ENCODE measurements at regions of chr19 and their contacts with region 1.

Region 1: DNA sequence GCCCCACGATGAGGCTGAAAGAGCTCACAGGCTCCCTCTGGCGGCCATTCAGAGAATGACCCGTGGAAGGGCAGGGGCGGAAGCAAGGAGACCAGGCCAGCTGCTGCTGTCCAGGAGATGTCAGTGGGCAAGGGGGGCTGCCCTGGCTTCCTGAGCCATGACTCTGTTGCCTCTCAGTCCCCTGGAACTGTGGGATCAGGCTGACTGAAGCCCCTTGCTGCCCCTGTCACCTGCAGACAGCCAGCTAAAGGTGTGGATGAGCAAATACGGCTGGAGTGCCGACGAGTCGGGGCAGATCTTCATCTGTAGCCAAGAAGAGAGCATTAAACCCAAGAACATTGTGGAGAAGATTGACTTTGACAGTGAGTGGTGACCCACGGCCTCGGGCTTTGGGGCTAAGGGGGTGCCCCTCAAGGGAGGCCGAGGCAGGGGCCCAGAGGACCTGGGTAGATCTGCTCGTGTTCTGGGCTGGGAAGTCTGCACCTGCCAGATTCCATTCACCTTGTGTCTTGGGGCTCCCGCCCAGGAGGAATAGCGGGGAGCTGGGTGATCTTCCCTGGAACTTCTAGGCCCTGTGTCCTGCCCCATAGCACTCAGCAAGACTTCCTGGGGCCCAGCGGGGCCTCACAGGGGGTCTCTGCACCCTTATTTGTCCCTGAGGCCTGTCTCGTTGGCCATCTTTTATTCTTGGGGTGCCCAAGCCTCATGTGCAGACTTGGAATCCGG is 12.5 kb upstream of the ACTN4 start:
- H3K4me3 ChIP-seq: no peak overlapping the region
- H3K27ac ChIP-seq: peak overlapping the region; percentile 31; the same call in 1 of the 2 replicates
- H3K4me1 ChIP-seq: no peaks in the 10 kb centered on the region; the same call in 1 of the 2 replicates
- CTCF ChIP-seq: peak; percentile 96

Region 2: GRCh38 chr19:38532939-38533338 is 102.0 kb before region 1 on chr19:
- CTCF ChIA-PET with region 1: interaction called, 11 read pairs
- POLR2A ChIA-PET with region 1: no interaction called
- H3K4me3 ChIP-seq: no peak overlapping the region
- H3K27ac ChIP-seq: no peak overlapping the region
- H3K4me1 ChIP-seq: no peaks in the 10 kb centered on the region
- CTCF ChIP-seq: no peak

Region 3: DNA sequence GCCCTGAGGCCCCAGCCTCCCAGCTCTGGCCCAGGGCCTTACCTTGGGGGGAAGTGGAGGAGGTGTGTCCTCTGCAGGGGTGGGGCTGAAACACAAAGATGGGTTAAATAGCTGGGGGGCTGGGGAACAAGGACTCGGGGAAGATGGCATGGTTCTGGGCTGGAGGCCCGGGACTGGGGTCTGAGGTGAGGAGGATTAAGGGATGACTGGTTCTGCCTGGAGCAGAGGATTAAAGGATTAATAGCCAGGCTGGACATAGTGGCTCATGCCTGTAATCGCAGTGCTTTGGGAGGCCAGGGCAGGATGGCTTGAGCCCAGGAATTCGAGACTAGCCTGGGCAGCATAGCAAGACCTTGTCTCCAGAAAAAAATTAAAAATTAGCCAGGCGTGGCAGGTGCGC is 28.8 kb before region 1 on chr19:
- CTCF ChIA-PET with region 1: interaction called, 13 read pairs
- POLR2A ChIA-PET with region 1: no interaction called
- H3K4me3 ChIP-seq: no peak overlapping the region
- H3K27ac ChIP-seq: no peak overlapping the region
- H3K4me1 ChIP-seq: no peaks in the 10 kb centered on the region
- CTCF ChIP-seq: no peak

Region 4: GRCh38 chr19:38666663-38667511 is 32.0 kb after region 1 on chr19:
- CTCF ChIA-PET with region 1: interaction called, 13 read pairs
- POLR2A ChIA-PET with region 1: interaction called, 4 read pairs
- H3K4me3 ChIP-seq: no peak overlapping the region
- H3K27ac ChIP-seq: peak overlapping the region; percentile 68
- H3K4me1 ChIP-seq: peaks cover 80% of the 10 kb centered on the region
- CTCF ChIP-seq: no peak

Region 5: DNA sequence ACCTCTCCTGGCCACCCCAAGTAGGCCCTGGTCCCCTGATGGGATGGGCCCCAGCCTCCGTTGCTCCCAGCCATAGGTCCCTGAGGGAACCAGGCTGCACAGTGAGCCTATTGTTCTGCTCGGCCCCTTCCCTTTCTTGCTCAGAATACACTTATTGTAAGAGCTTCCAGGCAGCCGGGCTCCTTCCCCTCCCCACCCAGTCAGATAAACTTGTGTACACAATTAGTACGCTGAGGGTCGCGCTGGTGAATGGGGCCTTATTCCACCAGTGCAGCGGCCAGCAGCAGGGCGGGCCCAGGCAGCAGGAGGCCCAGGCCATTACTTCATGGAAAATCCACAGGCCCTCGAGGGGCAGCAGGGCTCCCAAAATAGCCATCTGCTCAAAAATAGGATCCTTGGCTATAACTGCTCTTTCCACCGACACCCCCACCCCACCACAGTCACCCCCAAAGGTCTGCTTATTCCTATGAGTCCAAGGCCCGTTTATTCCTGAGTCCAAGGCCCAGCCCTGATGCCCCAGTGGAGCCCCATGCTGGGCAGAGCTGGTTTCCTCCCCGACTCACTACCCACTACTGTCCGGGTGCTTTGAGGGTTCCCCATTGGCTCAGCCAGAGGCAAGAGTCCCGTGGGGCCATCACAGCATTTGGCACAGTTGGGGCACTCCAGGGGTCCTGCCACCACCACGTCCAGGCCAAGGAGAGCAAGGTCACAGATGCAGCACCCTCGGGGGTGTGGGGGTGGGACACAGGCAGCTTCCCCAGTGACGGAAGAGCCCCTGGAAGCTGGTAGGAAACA is 87.3 kb after region 1 on chr19:
- CTCF ChIA-PET with region 1: interaction called, 10 read pairs
- POLR2A ChIA-PET with region 1: no interaction called
- H3K4me3 ChIP-seq: no peak overlapping the region
- H3K27ac ChIP-seq: peak overlapping the region; percentile 45; the same call in 1 of the 2 replicates
- H3K4me1 ChIP-seq: no peaks in the 10 kb centered on the region
- CTCF ChIP-seq: no peak

Region 6: GRCh38 chr19:40190891-40191835 is 1556.2 kb after region 1 on chr19 and contains the start of gene MAP3K10:
- CTCF ChIA-PET with region 1: no interaction called
- POLR2A ChIA-PET with region 1: no interaction called
- H3K4me3 ChIP-seq: peak within 1 kb of the TSS; percentile 81
- H3K27ac ChIP-seq: peak within 1 kb of the TSS; percentile 99
- H3K4me1 ChIP-seq: peaks cover 19% of the 10 kb centered on the region
- CTCF ChIP-seq: peak; percentile 51; the same call in 1 of the 2 replicates